Lower leg skin (tissue), 4 donors: ENCODE measurements at regions of chr11 and their contacts with region 1.

Region 1: GRCh38 chr11:57249384-57250319 is 12.6 kb upstream of the APLNR start:
- DNase-seq: peak; percentile 52 to 89
- H3K4me3 ChIP-seq: no peak overlapping the region
- CTCF ChIP-seq: no peak
- POLR2A ChIP-seq: no peak

Region 2: DNA sequence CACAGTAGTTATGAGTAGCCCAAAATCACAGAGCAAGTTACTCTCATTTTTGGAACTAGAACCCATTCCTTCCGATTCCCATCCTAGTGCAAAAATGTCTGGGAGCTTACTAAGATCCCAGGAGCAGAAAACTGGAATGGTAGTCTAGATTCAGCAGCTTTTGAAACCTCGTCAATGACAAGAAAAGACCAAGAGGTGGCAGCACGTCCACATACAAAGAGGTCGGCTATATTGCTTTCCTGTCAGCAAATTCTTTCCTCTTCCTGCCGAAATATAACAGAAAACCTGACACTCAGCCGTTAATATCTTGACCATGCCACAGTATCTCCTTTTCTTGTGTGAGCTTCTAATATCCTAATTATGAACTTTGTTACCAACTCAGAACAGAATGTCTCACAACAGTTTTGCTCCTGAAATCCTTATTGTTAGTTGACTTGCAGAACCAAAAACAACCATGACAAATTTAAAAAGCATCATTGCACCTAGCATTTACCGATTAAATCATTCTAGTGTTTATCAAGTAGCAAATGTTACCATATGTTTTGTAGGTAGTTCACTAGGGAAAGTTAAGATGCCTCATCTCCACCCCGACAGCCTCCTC is 408.3 kb before region 1 on chr11:
- intact Hi-C with region 1: loop called (anchors 5 kb)
- DNase-seq: peak in 1 of 2 donors; percentile 41
- H3K4me3 ChIP-seq: no peak overlapping the region
- CTCF ChIP-seq: no peak
- POLR2A ChIP-seq: no peak

Region 3: DNA sequence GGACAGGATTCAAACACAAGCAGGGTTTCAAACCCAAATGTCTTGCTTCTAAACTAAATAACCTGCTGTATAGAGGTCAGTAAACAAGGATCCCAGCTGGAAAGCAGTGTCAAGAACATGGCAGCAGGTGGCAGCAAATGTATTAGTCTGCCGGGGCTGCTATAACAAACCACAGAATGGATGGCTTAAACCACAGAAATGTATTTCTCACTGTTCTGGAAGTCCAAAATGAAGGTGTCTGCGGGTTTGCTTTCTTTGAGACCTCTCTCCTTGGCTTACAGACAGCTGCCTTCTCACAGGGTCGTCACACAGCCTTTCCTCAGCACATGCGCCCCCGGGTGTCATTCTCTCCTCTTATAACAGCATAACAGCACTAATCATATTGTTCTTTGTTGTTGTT is 133.0 kb before region 1 on chr11:
- intact Hi-C with region 1: loop called (anchors 10 kb)
- DNase-seq: peak in 1 of 2 donors; percentile 21
- H3K4me3 ChIP-seq: no peak overlapping the region
- CTCF ChIP-seq: no peak
- POLR2A ChIP-seq: no peak

Region 4: DNA sequence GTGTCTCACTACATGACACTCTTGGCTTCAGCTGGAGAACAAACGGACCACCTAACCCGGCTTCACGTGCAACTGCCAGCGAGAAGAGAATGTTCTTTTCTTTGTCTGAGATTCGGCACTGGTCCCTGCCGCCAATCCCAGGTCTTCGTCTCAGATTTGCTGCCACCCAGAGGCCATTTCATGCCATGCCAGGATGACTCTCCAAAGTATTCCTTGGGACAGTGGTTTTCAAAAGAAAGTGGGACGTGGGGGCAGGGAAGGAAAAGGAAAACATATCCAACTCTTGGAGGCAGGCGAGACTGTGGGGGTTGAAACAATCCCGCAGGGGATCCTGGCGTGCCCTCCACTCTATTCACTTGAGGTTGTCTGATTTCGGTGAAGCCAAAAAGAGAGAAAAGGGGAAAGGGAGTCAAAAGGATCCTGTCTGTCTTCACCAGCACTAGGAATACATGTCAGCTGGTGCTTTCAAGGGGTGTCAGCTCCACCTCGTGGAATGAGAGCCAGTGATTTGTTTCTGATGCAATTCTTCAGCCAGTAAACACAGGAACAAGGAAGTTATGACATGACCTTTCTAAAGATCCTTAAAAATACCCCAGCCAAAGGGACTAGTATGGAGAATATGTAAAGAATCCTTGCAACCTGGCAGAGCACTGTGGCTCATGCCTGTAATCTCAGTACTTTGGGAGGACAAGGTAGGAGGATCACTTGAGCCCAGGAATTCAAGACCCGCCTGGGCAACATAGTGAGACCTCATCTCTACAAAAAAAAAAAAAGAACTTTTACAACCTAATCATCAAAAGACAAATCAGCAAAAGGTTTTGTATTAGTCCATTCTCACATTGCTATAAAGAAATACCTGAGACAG is 28.4 kb after region 1 on chr11:
- intact Hi-C with region 1: loop called (anchors 2 kb)
- DNase-seq: peak; percentile 80 to 94
- H3K4me3 ChIP-seq: no peak overlapping the region
- CTCF ChIP-seq: peak in 1 of 3 donors; percentile 75
- POLR2A ChIP-seq: no peak

Region 5: DNA sequence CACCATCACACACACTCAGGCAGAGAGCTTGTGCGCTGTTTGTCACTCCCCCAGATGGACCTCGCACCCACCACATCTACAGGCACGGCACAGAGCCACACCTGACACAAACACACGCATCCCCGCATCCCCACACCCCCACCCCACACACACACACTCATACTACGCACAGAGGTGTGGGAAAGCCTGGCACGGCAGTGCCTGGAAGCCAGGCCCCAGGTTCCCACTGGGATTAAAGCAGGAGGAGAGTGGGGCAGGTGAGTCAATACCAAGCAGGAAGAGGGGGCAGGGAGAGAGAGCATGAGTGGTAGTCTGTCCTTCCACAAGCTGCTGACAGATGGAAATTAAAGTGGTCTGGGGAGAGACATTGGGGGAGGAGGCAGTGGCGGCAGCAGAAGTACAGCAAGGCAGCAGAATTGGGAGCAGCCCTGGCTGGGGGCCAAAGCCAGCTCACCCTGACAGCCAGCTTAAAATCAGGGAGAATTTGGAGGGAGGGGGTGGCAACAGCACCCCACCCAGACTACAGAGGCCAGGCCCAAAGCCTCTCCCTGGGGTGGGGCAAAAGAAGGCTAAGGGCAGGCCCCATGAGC is 54.4 kb after region 1 on chr11:
- intact Hi-C with region 1: no loop called
- DNase-seq: peak; percentile 40 to 91
- H3K4me3 ChIP-seq: no peak overlapping the region
- CTCF ChIP-seq: no peak
- POLR2A ChIP-seq: no peak